Left cardiac atrium (tissue), 4 donors: ENCODE measurements at regions of chr12 and their contacts with region 1.

Region 1: DNA sequence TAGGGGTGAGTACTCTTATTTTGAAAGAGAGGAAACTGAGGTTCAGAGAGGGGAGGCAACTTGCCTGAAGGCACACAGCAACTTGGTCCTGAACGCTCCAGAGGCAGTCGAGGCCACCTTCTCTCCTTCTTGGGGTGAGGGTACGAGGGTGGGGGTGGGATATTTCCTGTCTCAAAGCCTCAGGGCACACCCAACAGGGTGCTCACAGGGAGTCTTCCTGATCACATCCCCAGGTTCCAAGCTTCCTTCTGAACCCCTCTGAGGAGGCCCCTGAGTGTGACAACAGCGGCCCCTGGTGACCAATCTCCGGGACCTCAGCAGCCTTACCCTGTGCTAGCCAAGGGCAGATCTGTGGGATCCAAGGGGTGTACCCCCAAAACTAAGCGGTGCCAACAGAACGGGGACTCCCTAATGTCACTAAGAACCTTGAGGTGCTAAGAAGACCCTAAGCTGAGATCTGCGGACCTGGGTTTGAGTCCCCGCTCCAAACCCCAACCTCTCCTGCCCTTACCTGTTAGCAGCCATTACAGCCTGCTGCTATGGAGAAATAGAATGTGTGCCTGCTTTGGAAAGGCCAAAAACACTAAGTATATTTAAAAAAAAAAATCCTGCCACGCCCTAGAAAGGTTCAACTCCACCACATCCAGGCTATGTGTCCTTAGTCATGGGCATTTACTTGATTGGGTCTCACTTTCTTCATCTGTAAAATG is 57.9 kb downstream of the TRPV4 start:
- DNase-seq: peak; percentile 71
- ATAC-seq: peak; percentile 82 to 88

Region 2: DNA sequence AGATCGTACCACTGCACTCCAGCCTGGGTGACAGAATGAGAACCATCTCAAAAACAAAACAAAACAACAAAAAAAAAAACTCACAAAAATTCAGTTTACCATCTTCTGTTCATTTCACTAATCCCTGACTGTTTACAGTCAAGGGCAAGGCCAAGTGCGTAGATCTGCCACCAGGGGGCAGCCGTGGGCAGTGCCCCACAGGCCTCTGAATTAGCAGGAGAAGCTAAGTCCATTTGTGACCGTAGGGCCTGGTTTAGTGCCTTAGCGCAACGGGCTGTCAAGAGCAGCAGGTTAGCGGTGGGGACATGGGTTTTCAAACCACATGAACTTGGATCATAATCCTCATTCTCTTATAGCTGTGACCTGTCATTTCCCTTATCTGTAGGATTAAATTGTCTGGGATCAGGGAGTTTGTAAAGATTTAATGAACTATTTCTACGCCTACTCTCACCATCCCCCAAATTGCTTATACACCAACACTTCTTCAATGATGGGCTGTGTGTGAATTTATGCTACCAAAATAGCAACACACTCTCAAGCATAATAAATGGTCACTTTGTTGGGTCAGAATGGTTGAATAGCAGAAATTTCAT is 347.2 kb before region 1 on chr12:
- intact Hi-C with region 1: loop called in 1 of 2 experiments (anchors 5 kb)
- DNase-seq: peak; percentile 82
- ATAC-seq: peak; percentile 93

Region 3: DNA sequence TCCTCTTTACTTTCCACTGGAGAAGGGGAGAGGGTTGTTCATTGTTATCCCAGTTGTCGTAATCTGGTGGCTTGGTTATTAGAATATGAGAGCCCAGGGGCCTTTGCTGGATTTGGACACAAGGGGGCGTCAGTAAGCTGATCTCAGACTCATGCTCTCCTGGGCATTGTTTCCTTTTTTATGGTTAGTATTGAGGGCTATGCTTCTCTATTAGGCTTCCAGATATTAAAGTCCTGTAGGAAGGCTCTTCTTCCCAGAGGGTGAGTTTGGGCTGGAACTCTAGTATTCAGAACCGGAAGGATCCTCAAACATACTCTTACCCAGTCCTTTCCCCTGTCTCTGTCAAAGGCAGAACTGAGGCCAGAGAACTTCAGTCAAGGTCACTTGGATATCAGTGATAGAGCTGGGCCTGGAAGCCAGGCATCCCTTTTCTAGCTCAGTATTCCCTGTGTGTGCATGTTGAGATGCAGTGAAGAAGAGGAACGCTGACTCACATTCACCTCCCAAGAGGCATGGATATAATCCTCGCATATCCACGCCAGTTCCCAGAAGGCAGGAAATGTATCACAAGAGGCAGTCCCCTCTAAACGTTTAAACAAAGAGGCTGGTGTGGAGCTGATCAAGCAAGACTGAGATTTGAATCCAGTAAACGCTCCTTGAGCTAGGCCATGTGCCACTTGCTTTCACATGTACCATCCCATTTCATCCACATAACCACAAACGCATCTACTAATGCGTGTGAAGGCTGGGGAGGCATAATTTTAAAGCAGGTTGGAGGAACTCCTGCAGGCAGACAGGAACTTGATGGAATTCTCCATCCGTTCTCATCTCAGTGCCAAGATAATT is 256.3 kb before region 1 on chr12:
- intact Hi-C with region 1: loop called (anchors 2 to 5 kb)
- DNase-seq: peak; percentile 69
- ATAC-seq: peak; percentile 50 to 60

Region 4: DNA sequence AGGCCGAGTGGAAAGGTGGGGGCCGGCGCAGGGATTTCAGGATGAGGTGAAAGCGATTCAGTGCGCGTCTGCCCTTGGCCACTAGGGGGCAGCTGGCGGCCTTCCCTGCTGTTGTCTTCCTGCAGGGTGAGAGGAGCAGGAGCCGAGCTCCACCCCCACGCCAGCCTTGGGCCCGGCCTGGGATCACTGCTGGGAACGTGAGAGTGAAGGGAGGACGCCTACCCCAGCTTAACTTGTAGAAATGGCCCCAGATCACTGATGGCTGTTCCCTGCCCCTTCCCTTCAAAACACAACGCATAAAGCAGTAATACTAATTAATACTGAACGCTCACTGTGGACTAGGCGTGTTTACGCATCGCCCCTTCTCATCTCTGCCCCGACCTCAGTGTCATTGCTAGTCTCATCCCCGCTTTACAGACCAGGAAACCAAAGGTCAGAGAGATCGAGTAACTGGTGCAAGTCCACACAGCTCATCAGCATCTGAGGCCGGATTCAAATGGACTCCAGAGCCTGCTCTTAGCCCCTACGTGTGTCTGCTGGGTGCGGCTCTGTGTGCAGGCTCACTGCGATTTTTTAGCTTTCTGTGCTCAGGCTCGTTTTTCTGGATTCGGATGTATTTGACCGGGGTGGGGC is 177.4 kb before region 1 on chr12:
- intact Hi-C with region 1: loop called in 1 of 2 experiments (anchors 1 kb)
- DNase-seq: peak; percentile 90
- ATAC-seq: peak; percentile 94 to 95

Region 5: DNA sequence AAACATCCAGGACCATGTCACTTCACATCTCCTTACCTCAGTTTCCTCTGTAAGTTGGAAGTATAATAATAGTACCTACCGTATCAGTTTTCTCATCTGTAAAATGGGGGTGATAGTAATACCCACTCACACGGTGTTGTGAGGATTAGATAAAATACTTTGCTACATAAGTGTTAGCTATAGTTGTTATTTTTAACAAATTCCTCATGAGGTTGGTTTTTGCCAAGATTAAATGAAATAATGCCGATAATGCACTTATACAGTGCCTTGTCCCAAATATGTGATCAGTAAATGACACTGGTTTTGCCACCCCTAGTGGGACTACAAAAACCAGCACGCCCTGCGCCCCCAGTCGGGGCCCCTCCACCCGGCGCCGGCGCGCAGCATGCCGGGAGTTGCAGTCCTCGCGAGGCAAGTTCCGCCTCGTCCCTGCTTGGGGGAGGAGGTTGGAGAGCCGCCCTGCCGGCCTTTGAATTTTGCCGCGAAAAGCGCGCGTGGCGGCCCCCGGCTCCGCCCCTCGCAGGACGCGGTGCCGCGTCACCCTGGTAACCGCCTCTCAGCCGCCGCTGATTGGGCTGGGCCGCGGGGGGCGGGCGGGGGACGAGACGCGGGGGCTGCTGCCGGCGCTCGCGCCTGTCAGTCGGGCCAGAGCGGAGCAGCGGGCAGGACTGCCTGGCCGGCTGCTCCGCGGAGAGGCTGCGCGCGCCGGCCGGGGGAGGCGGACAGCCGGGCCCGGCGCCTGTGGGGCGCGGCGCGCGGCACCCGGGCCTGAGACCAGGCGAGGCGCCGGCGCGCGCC is 61.9 kb before region 1 on chr12 and contains the start of gene FAM222A:
- intact Hi-C with region 1: loop called in 1 of 2 experiments (anchors 10 kb)
- DNase-seq: peak; percentile 98
- ATAC-seq: peak; percentile 95 to 96
- total RNA-seq, gene FAM222A: 14.5 to 21.8 TPM

Region 6: DNA sequence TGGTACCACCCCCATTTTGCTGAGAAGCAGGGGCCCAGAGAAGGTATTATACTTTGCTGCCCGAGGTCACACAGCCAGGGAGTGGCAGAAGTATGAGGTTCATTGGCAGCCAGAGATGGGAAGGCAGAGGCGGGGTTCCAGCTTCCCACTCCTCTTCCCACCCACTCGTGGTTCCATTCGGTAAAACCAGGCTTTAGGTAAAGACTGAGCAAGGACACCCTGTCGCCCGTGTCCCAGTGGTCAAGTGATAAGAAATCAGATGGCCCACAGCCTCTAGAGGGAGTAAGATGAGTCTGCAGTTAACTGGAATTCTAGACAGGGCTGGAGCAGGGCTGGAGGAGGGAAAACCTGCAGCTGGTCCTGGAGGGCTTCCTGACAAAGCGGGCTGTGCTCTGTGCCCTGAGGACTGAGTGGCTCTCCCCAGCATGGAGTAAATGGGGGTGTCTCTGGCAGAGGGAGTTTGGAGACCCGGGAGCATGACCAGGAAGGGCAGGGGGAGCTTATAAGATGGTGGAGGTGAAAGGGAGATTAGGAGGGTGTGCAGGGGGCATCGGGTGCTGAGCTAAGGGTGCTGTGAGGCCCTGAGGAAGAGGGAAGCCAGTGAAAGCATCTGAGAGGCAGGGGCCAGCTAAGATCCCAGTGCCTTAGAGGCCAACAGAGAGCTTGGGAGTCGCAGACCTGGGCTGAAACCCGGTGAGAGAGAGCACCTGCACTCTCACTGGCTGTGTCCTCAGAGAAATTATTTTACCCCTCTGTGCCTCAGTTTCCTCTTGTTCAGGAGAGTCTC is 55.9 kb before region 1 on chr12:
- intact Hi-C with region 1: loop called (anchors 2 to 10 kb)
- DNase-seq: no peak
- ATAC-seq: no peak